ENCODE measurements at regions of chr1 and their contacts with region 1.

Region 1: GRCh38 chr1:237864338-237865244 is 26.1 kb downstream of the ZP4 start:
- DNase-seq: peak; percentile 39 to 43
- ATAC-seq: peak; percentile 86 to 93
- H3K4me3 ChIP-seq: no peak overlapping the region
- H3K27ac ChIP-seq: no peak overlapping the region
- H3K4me1 ChIP-seq: no peaks in the 10 kb centered on the region
- CTCF ChIP-seq: peak; percentile 74
- EP300 ChIP-seq: no peak
- POLR2A ChIP-seq: no peak
- RAD21 ChIP-seq: peak; percentile 78 to 79

Region 2: DNA sequence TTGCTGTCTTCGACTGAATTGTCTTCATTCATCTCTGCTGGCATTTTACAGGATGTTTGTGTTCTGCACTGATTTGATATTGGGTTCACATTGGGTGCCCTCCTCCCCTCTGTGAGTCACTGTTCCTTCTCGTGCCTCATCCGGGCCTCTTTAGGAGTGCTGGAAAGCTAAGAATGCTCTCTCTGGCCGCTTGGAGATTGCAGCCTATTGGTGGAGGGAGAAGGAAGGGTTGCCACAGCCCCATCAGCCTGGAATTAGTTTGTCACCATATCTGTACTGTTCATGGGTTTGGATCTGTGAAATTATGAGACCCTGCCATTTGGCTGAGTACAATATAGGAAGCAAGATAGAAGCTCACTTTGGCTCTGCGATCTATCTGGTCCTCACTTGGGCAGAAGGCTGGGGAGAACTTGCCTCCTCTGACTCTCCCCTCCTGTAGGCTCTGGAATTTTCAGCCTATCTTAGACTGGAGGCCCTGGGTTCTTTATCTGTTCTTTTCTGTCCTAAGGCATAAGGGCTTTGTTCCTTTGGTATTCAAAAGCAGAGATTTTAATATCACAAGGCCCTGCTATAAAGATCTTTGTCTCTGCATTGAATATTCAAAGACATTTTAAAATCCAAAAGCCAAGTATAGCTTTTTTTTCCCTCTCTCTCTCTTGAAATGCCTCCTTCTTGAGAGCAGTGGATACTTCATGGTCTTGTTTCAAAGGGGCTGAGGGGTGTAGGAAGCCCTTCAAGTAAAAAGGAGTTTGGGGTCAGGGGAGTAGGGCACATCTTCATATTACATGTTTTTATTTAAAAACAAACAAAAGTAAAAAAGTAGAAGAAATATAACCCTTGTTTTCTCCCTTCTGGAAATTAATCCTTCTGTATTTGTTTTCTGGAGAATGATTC is 321.8 kb before region 1 on chr1:
- CTCF ChIA-PET with region 1: no interaction called
- POLR2A ChIA-PET with region 1: no interaction called
- DNase-seq: no peak
- ATAC-seq: peak in 1 of 2 experiments; percentile 34; a peak in 1 of 6 replicates
- H3K4me3 ChIP-seq: no peak overlapping the region
- H3K27ac ChIP-seq: no peak overlapping the region
- H3K4me1 ChIP-seq: no peaks in the 10 kb centered on the region
- CTCF ChIP-seq: no peak
- EP300 ChIP-seq: no peak
- POLR2A ChIP-seq: no peak
- RAD21 ChIP-seq: no peak

Region 3: GRCh38 chr1:237851210-237851845 is 13.3 kb before region 1 on chr1:
- CTCF ChIA-PET with region 1: interaction called, 30 read pairs
- POLR2A ChIA-PET with region 1: no interaction called
- DNase-seq: peak; percentile 14 to 58
- ATAC-seq: peak in 1 of 2 experiments; percentile 82; a peak in 3 of 6 replicates
- H3K4me3 ChIP-seq: no peak overlapping the region
- H3K27ac ChIP-seq: no peak overlapping the region
- H3K4me1 ChIP-seq: no peaks in the 10 kb centered on the region
- CTCF ChIP-seq: peak; percentile 44
- EP300 ChIP-seq: no peak
- POLR2A ChIP-seq: no peak
- RAD21 ChIP-seq: peak; percentile 58 to 69

Region 4: DNA sequence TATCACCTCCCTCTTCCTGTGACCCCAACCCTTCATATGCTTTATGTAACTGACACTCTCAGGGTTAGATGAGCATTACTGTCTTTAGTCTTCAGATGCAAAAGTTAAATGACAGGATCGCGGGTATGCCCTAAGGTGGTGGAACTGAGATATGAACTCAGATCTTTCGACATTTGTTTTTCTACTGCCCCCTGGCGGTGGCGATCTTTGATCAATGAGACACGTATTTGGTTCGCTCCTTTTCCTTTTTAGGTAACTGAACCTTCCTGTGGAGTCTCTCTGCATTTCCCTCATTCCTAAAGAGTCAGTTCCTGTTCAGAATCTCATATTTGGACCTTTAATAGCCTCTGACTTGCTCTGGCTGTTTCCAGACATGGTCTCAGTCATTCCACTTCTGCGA is 74.0 kb after region 1 on chr1:
- CTCF ChIA-PET with region 1: interaction called, 23 read pairs
- POLR2A ChIA-PET with region 1: no interaction called
- DNase-seq: peak in 1 of 2 experiments; percentile 28
- ATAC-seq: peak in 1 of 2 experiments; percentile 66; a peak in 3 of 6 replicates
- H3K4me3 ChIP-seq: no peak overlapping the region
- H3K27ac ChIP-seq: no peak overlapping the region
- H3K4me1 ChIP-seq: no peaks in the 10 kb centered on the region
- CTCF ChIP-seq: peak; percentile 43
- EP300 ChIP-seq: no peak
- POLR2A ChIP-seq: no peak
- RAD21 ChIP-seq: peak; percentile 27 to 44; a peak in 2 of 5 replicates

Measured in A549 (cell line).